Activated naive CD4-positive, alpha-beta T cell treated with anti-CD3 and anti-CD28 coated beads for 36 hours (primary cell): ENCODE measurements at regions of chr4 and their contacts with region 1.

Region 1: DNA sequence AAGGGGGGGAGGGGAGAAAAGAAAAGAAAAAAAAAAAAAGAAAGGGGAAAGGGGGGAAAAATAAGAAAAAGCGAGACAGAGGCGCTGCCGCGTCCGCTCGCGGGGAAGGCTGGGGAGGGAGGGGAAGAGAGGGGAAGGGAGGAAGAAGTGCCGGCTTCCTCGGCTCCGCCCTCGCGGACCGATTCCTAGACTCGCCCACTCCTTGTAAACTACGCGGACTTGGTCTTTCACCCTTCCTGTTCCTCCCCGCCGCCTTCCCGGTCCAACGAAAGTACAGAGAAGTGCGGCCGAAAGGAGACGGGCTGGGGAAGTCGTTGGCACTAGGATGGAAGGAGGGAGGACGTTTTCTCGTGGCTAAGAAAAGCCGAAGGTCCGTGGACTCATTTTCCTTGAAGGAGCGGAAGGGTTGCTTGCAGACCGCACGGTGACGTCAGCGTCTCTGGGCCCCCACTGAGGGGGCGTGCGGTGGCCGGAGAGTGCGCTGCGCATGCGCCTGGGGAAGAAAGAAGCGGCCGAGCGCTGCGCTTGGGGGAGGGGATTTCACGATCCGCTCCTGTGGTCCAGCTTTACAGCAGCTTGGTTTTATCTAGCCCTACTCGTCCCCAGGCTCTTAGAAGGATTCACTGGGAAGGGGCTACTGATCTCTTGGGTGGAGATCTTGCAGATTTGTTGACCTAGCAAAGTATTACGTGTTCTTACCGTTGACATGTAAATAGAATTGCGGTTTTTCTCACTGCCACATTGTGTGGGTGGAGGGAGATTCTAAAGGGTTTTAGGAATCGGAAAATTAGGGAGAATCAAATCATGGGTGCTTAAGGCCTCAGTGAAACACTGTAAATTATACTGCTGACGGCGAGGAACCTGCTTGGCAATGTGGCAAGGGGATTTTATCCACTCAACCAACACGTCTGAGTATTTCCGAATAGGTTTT is at the start of gene CCNI:
- DNase-seq: peak; percentile 93
- H3K4me3 Mint-ChIP-seq: peak within 1 kb of the TSS; percentile 99
- H3K27ac Mint-ChIP-seq: peak within 1 kb of the TSS; percentile 100
- H3K4me1 Mint-ChIP-seq: peaks cover 40% of the 10 kb centered on the region
- H3K27me3 Mint-ChIP-seq: no peaks in the 10 kb centered on the region
- total RNA-seq, gene CCNI: 211 to 218 TPM

Region 2: DNA sequence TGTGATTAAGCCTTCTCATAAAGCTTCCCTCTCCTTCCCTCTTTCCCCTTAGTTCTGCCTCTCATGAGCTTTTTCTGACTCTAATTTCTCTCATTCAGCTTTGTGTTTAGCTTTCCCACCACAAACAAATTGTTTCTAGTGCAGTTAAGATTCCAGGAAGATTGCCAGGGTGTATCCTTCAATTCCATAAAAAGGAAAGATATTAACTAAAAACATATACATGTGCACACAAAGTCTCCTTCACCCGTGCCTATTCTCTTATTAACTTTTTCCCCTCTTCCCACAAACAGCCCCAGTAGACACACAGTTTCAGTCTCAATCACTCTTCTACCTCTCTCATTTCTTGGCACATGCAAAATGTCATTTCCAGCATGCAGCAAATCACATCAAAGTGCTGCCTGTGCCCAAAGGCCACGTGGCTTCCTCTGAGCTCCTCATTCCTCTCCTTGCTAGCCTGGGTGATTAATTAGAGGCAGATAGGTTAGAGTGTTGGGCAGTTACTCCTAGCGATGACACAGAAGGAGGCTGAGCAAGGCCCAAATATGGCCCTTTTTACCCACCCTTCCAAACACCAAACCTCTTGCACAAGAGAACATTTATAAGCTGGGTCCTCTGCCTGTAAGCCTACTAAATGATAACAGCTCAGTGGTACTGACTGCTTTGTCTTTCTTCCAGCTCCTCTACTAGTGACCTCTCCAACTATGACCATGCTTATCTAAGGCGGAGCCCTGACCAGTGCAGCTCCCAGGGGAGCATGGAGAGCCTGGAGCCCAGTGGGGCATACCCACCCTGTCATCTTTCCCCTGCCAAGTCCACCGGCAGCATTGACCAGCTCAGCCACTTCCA is 337.8 kb before region 1 on chr4:
- CTCF ChIA-PET with region 1: no interaction called
- intact Hi-C with region 1: loop called (anchors 1 kb)
- DNase-seq: peak; percentile 80
- H3K4me3 Mint-ChIP-seq: no peak overlapping the region
- H3K27ac Mint-ChIP-seq: peak overlapping the region; percentile 71
- H3K4me1 Mint-ChIP-seq: peaks cover 16% of the 10 kb centered on the region
- H3K27me3 Mint-ChIP-seq: no peaks in the 10 kb centered on the region

Region 3: GRCh38 chr4:76993787-76994641 is 82.1 kb before region 1 on chr4:
- CTCF ChIA-PET with region 1: no interaction called
- intact Hi-C with region 1: loop called (anchors 1 kb)
- DNase-seq: peak; percentile 82
- H3K4me3 Mint-ChIP-seq: peak overlapping the region; percentile 53
- H3K27ac Mint-ChIP-seq: peak overlapping the region; percentile 65
- H3K4me1 Mint-ChIP-seq: peaks cover 57% of the 10 kb centered on the region
- H3K27me3 Mint-ChIP-seq: no peaks in the 10 kb centered on the region

Region 4: GRCh38 chr4:77052352-77052751 is 23.8 kb before region 1 on chr4:
- CTCF ChIA-PET with region 1: interaction called, 4 read pairs
- intact Hi-C with region 1: loop called (anchors 1 kb)
- DNase-seq: peak; percentile 81
- H3K4me3 Mint-ChIP-seq: no peak overlapping the region
- H3K27ac Mint-ChIP-seq: peak overlapping the region; percentile 50
- H3K4me1 Mint-ChIP-seq: no peaks in the 10 kb centered on the region
- H3K27me3 Mint-ChIP-seq: no peaks in the 10 kb centered on the region

Region 5: DNA sequence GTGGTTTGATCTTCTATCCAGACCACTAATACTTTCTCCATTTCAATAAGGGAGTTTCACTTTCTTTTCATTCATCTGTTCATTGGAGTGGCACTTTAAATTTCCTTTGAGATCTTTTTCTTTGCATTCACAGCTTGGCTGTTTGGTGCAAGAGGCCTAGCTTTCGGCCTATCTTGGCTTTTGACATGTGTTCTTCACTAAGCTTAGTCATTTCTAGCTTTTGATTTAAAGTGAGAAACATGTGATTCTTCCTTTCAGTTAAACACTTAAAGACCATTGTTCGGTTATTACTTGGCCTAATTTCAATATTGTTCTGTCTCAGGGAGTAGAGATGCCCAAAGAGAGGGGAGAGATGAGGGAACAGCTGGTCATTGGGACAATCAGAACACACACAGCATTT is 553.8 kb after region 1 on chr4:
- CTCF ChIA-PET with region 1: no interaction called
- intact Hi-C with region 1: no loop called
- DNase-seq: peak; percentile 37
- H3K4me3 Mint-ChIP-seq: no peak overlapping the region
- H3K27ac Mint-ChIP-seq: no peak overlapping the region
- H3K4me1 Mint-ChIP-seq: peaks cover 16% of the 10 kb centered on the region
- H3K27me3 Mint-ChIP-seq: no peaks in the 10 kb centered on the region